ENCODE measurements at regions of chr3 and their contacts with region 1.

Region 1: DNA sequence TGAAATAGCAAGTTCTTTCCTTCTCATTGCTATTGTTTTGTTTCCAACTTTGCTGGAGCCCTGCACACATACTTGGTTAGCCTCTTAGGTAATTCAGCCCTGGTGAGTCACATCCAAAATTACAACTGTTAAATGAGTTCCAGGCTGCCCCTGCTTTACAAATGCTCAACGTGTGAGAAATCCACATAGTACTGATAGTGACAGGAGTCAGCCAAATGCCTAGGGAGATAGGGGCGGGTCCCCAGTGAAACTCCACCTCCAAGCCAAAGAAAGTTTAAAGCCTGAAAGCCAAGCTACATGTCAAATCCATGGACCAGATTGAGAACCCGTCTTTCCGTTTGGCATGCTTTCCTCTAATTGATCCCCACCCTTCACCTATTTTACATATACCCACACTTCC is 81.3 kb upstream of the RNF7 start:
- DNase-seq: peak; percentile 84
- H3K4me3 ChIP-seq: no peak overlapping the region
- H3K27me3 ChIP-seq: 0 out of 2 replicates have a peak, but pooled peaks cover 2% of the 10 kb centered on the region
- CTCF ChIP-seq: no peak

Region 2: DNA sequence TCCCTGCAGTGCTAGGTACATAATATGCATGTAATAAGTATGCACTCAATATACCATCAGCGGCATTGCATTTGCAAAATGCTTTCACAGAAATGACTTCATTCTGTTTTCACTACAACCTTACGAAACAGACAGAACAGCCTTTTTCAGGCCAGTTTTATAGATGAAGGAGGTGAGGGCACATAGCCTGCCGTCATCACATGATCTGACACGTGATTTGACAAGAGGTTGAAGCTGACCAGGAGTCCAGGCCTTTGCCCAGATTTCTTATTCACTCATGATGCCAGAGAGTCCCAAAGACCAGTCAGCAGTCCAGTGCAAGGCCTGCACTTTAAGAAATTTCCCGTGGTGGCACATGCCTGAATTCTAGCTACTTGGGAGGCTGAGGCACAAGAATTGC is 63.1 kb after region 1 on chr3:
- CTCF ChIA-PET with region 1: no interaction called
- POLR2A ChIA-PET with region 1: no interaction called
- DNase-seq: no peak
- H3K4me3 ChIP-seq: no peak overlapping the region
- H3K27me3 ChIP-seq: no peaks in the 10 kb centered on the region; the same call in 1 of the 2 replicates
- CTCF ChIP-seq: no peak

Region 3: GRCh38 chr3:141738022-141738890 is 81.4 kb after region 1 on chr3 and contains the start of gene RNF7:
- CTCF ChIA-PET with region 1: interaction called, 3 read pairs
- POLR2A ChIA-PET with region 1: interaction called, 19 read pairs
- DNase-seq: peak; percentile 59
- H3K4me3 ChIP-seq: peak within 1 kb of the TSS; percentile 94
- H3K27me3 ChIP-seq: no peaks in the 10 kb centered on the region
- CTCF ChIP-seq: peak; percentile 60
- polyA plus RNA-seq, gene RNF7: 74.4 and 99.6 TPM in 2 replicates

Region 4: GRCh38 chr3:142046320-142047020 is 389.7 kb after region 1 on chr3:
- CTCF ChIA-PET with region 1: no interaction called
- POLR2A ChIA-PET with region 1: interaction called, 10 read pairs
- DNase-seq: no peak
- H3K4me3 ChIP-seq: no peak overlapping the region
- H3K27me3 ChIP-seq: no peaks in the 10 kb centered on the region
- CTCF ChIP-seq: no peak